GM12878 (cell line): ENCODE measurements at regions of chr5 and their contacts with region 1.

Region 1: GRCh38 chr5:139787568-139788293 is 7.9 kb upstream of the PSD2 start:
- DNase-seq: peak; percentile 26
- ATAC-seq: peak; percentile 93
- H3K4me3 ChIP-seq: peak overlapping the region; percentile 75
- H3K27ac ChIP-seq: no peak overlapping the region
- H3K4me1 ChIP-seq: no peaks in the 10 kb centered on the region
- H3K27me3 ChIP-seq: peaks cover 0 to 1% of the 10 kb centered on the region in 2 experiments; a peak in 3 of 4 replicates
- CTCF ChIP-seq: peak; percentile 92 to 98 (median 95)
- EP300 ChIP-seq: no peak
- POLR2A ChIP-seq: no peak
- RAD21 ChIP-seq: peak; percentile 96

Region 2: GRCh38 chr5:139682016-139682975 is 105.4 kb before region 1 on chr5:
- CTCF ChIA-PET with region 1: no interaction called
- POLR2A ChIA-PET with region 1: no interaction called
- RAD21 ChIA-PET with region 1: no interaction called
- SMC1A ChIA-PET with region 1: no interaction called
- in situ Hi-C with region 1: no loop called
- intact Hi-C with region 1: no loop called
- DNase-seq: no peak
- ATAC-seq: no peak
- H3K4me3 ChIP-seq: no peak overlapping the region
- H3K27ac ChIP-seq: no peak overlapping the region
- H3K4me1 ChIP-seq: no peaks in the 10 kb centered on the region; the same call in 1 of the 2 replicates
- H3K27me3 ChIP-seq: no peaks in the 10 kb centered on the region
- CTCF ChIP-seq: no peak
- EP300 ChIP-seq: no peak
- POLR2A ChIP-seq: peak; percentile 51
- RAD21 ChIP-seq: no peak

Region 3: GRCh38 chr5:139844472-139845145 is 56.9 kb after region 1 on chr5:
- CTCF ChIA-PET with region 1: interaction called, 146 read pairs
- POLR2A ChIA-PET with region 1: no interaction called
- RAD21 ChIA-PET with region 1: interaction called, 36 read pairs
- SMC1A ChIA-PET with region 1: interaction called, 41 read pairs
- in situ Hi-C with region 1: loop called (anchors 5 kb)
- intact Hi-C with region 1: loop called (anchors 1 kb)
- DNase-seq: peak; percentile 23
- ATAC-seq: peak; percentile 82
- H3K4me3 ChIP-seq: no peak overlapping the region
- H3K27ac ChIP-seq: no peak overlapping the region
- H3K4me1 ChIP-seq: peaks cover 12% of the 10 kb centered on the region
- H3K27me3 ChIP-seq: no peaks in the 10 kb centered on the region; a peak in 1 of 4 replicates
- CTCF ChIP-seq: peak; percentile 85 to 93 (median 89)
- EP300 ChIP-seq: no peak
- POLR2A ChIP-seq: no peak
- RAD21 ChIP-seq: peak; percentile 82

Region 4: DNA sequence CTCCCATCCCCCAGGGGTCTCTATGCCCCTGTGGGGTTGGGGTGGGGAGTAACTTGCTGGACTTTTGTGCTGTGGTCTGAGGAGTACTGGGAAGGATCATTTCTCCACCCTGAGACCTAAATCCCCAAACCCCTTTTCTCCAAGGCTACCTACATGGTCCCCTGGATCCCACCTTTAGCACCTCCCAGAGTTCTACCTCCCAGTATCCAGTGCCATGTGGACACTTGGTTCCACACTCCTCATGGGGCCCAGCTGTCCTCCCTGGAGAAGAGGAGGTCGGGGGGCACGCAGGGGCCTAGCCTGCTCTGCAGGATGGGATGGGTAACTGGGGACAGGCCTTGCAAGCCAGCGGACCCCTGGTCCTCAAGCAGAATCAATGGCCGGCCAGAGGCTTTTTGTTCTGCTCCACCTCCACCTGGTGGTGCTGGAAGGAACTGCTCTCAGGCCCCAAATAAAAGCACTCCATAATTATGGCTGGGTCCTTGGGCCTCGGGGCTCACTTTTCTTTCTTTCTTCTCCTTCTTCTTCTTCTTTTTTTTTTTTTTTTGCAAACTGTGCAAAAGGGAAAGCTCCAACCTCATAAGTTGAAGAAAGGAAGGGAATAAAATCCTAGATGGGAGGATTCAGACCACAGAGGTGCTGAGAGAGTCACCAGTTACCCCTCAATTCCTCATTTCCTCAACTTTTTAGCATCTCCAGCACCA is 76.3 kb after region 1 on chr5:
- CTCF ChIA-PET with region 1: interaction called, 61 read pairs
- POLR2A ChIA-PET with region 1: interaction called, 7 read pairs
- RAD21 ChIA-PET with region 1: interaction called, 30 read pairs
- SMC1A ChIA-PET with region 1: interaction called, 13 read pairs
- in situ Hi-C with region 1: no loop called
- intact Hi-C with region 1: loop called (anchors 1 kb)
- DNase-seq: no peak
- ATAC-seq: peak; percentile 91
- H3K4me3 ChIP-seq: no peak overlapping the region
- H3K27ac ChIP-seq: no peak overlapping the region
- H3K4me1 ChIP-seq: peaks cover 8% of the 10 kb centered on the region
- H3K27me3 ChIP-seq: no peaks in the 10 kb centered on the region
- CTCF ChIP-seq: peak; percentile 76 to 85 (median 81)
- EP300 ChIP-seq: no peak
- POLR2A ChIP-seq: no peak
- RAD21 ChIP-seq: peak; percentile 74

Region 5: GRCh38 chr5:139960723-139961383 is 173.1 kb after region 1 on chr5:
- CTCF ChIA-PET with region 1: interaction called, 298 read pairs
- POLR2A ChIA-PET with region 1: interaction called, 3 read pairs
- RAD21 ChIA-PET with region 1: interaction called, 131 read pairs
- SMC1A ChIA-PET with region 1: interaction called, 6 read pairs
- in situ Hi-C with region 1: loop called (anchors 5 kb)
- intact Hi-C with region 1: no loop called
- DNase-seq: peak; percentile 61
- ATAC-seq: peak; percentile 93
- H3K4me3 ChIP-seq: no peak overlapping the region
- H3K27ac ChIP-seq: no peak overlapping the region
- H3K4me1 ChIP-seq: peaks cover 53% of the 10 kb centered on the region
- H3K27me3 ChIP-seq: no peaks in the 10 kb centered on the region
- CTCF ChIP-seq: no peak
- EP300 ChIP-seq: no peak
- POLR2A ChIP-seq: no peak
- RAD21 ChIP-seq: peak; percentile 5; the same call in 1 of the 2 replicates

Region 6: DNA sequence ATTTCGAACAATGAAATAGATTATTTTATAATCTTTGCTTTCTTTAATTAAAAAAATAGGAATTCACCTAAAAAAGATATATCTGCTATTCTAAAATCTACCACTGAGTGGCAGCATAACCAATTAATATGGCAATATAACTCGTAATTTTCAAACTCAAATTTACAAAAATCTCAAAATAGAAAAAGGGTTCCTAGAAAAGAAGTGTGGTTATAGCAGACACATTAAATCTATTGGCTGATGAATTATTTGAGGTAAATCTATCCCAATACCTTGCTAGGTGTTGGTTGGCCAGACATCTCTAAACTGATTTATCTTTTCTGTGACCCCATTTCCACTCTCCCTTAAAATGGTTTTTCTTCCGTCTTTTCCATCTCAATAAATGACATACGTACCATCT is 285.6 kb after region 1 on chr5:
- CTCF ChIA-PET with region 1: interaction called, 5 read pairs
- POLR2A ChIA-PET with region 1: no interaction called
- RAD21 ChIA-PET with region 1: interaction called, 3 read pairs
- SMC1A ChIA-PET with region 1: interaction called, 4 read pairs
- in situ Hi-C with region 1: no loop called
- intact Hi-C with region 1: loop called (anchors 10 kb)
- DNase-seq: no peak
- ATAC-seq: no peak
- H3K4me3 ChIP-seq: no peak overlapping the region
- H3K27ac ChIP-seq: no peak overlapping the region
- H3K4me1 ChIP-seq: no peaks in the 10 kb centered on the region
- H3K27me3 ChIP-seq: peaks cover 0 to 3% of the 10 kb centered on the region in 2 experiments; a peak in 1 of 4 replicates
- CTCF ChIP-seq: peak in 2 of 3 experiments; percentile 28 to 34; a peak in 2 of 6 replicates
- EP300 ChIP-seq: no peak
- POLR2A ChIP-seq: no peak
- RAD21 ChIP-seq: peak; percentile 51

Region 7: DNA sequence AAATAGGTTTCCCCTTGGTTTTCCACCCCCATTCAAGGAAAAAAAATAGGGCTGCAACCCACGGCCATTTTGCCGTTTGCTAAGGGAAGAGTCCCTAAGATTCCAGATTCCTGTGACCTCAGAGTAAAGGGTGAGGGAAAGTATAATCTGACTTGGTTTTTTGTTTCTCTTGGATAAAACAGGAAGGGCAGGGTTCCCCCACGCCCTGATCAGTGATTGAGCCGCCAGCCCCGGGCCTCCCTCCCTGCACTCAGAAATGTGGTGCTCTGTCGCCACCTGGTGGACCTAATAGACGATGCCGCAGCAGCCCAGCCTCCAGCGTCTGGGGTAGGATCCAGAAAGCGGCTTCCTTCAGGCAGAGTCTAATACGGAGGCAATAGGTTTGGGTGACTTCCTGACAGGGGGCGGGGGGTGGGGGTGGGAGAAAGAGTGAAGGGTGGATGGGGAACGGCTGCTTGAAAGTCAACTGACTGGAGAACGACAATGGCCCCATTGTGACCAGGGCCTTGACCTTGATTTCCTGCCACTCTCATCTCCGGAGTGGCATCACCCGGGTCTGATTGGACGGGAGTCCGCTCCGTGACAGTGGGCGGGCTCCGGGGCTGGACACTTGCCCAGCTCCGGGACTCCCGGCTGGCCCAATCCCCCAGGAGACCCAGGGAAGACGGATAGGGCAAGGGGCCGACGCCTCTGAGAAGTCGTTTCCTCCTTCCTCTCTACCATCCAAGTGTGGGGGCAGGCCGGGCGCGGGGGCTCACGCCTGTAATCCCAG is 369.5 kb after region 1 on chr5:
- CTCF ChIA-PET with region 1: interaction called, 15 read pairs
- POLR2A ChIA-PET with region 1: no interaction called
- RAD21 ChIA-PET with region 1: interaction called, 4 read pairs
- SMC1A ChIA-PET with region 1: interaction called, 8 read pairs
- in situ Hi-C with region 1: loop called (anchors 5 kb)
- intact Hi-C with region 1: loop called (anchors 1 kb)
- DNase-seq: peak; percentile 33
- ATAC-seq: peak; percentile 99
- H3K4me3 ChIP-seq: peak overlapping the region; percentile 41; the same call in 1 of the 2 replicates
- H3K27ac ChIP-seq: peak overlapping the region; percentile 24; the same call in 1 of the 2 replicates
- H3K4me1 ChIP-seq: peaks cover 4% of the 10 kb centered on the region
- H3K27me3 ChIP-seq: no peaks in the 10 kb centered on the region; a peak in 1 of 4 replicates
- CTCF ChIP-seq: peak; percentile 88 to 95 (median 94)
- EP300 ChIP-seq: no peak
- POLR2A ChIP-seq: no peak
- RAD21 ChIP-seq: peak; percentile 96